ENCODE measurements at regions of chr11 and their contacts with region 1.

Region 1: DNA sequence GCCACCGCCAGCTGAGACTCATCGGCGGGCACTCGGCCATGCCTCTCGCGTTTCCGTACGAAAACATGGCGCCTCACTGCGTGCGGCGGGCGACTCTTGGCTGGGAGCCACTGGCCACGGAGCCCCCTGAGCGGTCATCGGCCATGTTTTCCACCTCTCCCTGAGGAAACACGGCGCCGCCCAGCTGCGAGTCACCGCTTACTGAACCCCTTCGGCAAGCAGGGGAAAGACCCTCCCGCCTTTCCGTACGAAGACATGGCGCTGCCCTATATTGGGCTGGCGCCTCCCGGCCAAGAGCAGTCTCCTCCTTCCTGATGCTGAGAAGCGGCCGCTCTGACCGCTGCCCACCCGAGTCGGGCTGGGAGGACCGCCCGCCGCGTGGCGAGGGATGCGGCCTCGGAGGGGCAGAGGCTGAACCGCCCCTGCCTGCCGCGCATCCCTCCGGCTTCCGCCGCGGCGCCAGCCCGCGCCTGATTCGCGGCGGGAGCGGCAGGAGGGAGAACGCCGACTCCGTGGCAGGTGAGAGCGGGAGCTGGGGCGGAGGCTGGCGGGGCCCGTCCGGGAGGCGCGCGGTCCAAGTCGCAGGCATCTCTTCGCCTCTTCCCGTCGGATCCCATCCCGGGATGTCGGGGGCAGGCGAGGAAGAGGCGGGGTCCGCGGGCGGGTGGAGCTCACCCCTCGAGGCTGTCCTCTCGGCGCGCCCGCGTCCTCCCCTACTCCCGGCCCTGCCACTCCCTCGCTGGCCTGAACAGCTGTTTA is at the start of gene TCP11L1:
- DNase-seq: peak; percentile 83 to 88
- ATAC-seq: peak; percentile 94 to 95
- H3K4me3 ChIP-seq: peak within 1 kb of the TSS; percentile 79 to 97 (median 91)
- H3K27ac ChIP-seq: peak within 1 kb of the TSS; percentile 90 to 95 (median 94)
- H3K4me1 ChIP-seq: peaks cover 6 to 15% of the 10 kb centered on the region in 2 donors
- H3K27me3 ChIP-seq: no peaks in the 10 kb centered on the region
- CTCF ChIP-seq: no peak
- POLR2A ChIP-seq: peak; percentile 51 to 64
- total RNA-seq, gene TCP11L1: 8.3 to 22.4 (median 19.0) TPM

Region 2: DNA sequence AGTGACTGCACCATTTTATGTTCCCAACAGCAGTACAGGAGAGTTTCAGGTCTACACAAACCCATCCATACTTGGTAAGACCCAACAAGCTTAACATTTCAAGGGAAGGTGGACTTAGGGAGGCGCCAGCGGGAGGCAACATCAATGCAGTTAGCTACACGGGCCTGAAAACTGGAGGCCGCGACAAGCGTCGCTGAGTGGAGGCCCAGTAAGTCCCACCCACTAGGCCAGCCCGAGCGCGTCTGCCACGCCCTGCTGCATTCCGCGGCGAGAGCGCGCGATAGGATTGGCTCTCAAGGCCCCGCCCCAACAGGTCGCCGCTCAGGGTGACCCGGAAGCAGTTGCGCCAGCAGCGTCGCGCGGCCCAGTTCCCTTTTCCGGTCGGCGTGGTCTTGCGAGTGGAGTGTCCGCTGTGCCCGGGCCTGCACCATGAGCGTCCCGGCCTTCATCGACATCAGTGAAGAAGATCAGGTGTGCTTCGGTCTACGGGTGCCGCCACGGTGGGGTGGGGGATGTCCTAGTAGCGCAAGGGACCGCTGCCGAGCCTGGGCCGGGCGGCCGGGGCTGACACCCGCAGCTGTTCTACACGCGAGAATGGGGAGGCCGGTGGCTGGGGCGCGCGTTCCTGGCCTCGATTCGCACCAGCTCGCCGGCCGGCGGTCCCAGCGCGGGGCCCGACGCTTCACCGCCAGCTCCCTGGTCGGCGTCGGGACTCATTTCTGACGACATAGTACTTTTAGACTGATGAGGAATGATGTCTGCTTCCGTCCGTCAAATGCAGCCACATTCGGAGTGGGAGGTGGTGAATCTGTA is 455.8 kb before region 1 on chr11 and contains the start of gene EIF3M:
- in situ Hi-C with region 1: loop called in 1 of 4 experiments (anchors 25 kb)
- intact Hi-C with region 1: no loop called
- DNase-seq: peak; percentile 88 to 94
- ATAC-seq: peak; percentile 96 to 98
- H3K4me3 ChIP-seq: peak within 1 kb of the TSS; percentile 76 to 92 (median 80)
- H3K27ac ChIP-seq: peak within 1 kb of the TSS; percentile 76 to 88 (median 80)
- H3K4me1 ChIP-seq: peaks cover 21 to 24% of the 10 kb centered on the region in 2 donors
- H3K27me3 ChIP-seq: no peaks in the 10 kb centered on the region
- CTCF ChIP-seq: no peak
- POLR2A ChIP-seq: peak; percentile 55 to 71
- total RNA-seq, gene EIF3M: 335 to 393 (median 355) TPM

Region 3: DNA sequence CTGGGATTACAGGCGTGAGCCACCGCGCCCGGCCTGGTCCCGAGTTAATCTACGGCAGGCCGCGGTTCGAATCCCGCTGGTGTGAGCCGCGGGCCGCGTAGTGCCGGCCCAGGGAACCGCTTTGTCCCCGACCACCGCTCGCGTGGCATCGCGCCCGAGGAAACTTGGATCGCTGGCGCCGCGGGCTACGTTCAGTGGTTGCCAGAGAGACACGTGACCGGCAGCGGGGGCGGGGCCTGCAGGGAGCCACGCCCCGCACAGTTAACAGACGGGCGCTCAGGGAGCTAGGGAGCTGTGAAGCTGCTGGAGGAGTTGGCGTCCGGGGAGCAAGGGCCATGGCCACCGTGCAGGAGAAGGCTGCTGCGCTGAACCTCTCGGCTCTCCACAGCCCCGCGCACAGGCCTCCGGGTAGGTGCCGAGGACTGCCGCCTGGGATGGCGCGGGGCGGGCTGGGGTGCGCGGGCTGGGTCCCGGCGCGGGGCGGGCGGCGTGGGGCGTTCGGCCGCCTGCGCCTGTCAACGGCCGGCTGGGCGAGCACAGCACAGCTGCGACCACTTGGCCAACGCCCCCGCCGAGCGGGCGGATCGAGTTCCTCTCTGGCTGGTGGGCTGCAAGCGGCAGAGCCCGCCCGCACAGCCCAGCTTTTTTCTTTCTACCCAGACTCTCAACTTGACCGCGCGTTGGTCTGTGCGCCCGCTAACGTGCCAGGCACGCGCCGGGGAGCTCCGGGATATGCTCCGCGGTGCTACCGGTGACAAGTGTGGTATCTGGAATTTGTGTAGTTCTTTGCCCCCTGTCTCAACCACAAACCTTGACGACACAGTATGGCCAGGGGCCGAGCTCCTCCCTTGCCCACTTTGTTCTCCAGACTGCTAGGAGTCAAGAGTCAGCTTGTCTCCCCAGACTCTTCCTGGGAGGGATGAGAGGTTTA is 23.6 kb before region 1 on chr11 and contains the start of gene DEPDC7:
- in situ Hi-C with region 1: no loop called
- intact Hi-C with region 1: loop called (anchors 1 kb)
- DNase-seq: peak; percentile 74 to 88
- ATAC-seq: peak; percentile 94 to 97
- H3K4me3 ChIP-seq: peak within 1 kb of the TSS; percentile 65 to 89 (median 69)
- H3K27ac ChIP-seq: peak within 1 kb of the TSS; percentile 76 to 86 (median 84)
- H3K4me1 ChIP-seq: peaks cover 26% of the 10 kb centered on the region in 2 donors
- H3K27me3 ChIP-seq: no peaks in the 10 kb centered on the region
- CTCF ChIP-seq: no peak
- POLR2A ChIP-seq: peak; percentile 45 to 74
- total RNA-seq, gene DEPDC7: 2.0 to 5.8 (median 2.8) TPM